Right cardiac atrium (tissue), 5 donors: ENCODE measurements at regions of chr17 and their contacts with region 1.

Region 1: GRCh38 chr17:9729034-9729650 is 62.2 kb downstream of the DHRS7C start:
- DNase-seq: no peak
- ATAC-seq: peak; percentile 50 to 68
- H3K4me3 ChIP-seq: no peak overlapping the region
- H3K27ac ChIP-seq: no peak overlapping the region
- H3K4me1 ChIP-seq: no peaks in the 10 kb centered on the region
- H3K27me3 ChIP-seq: no peaks in the 10 kb centered on the region

Region 2: GRCh38 chr17:9676085-9676484 is 53.1 kb before region 1 on chr17:
- intact Hi-C with region 1: no loop called
- DNase-seq: no peak
- ATAC-seq: no peak
- H3K4me3 ChIP-seq: no peak overlapping the region
- H3K27ac ChIP-seq: no peak overlapping the region
- H3K4me1 ChIP-seq: no peaks in the 10 kb centered on the region
- H3K27me3 ChIP-seq: no peaks in the 10 kb centered on the region

Region 3: GRCh38 chr17:9768381-9768934 is 39.3 kb after region 1 on chr17:
- intact Hi-C with region 1: loop called in 1 of 4 experiments (anchors 5 kb)
- DNase-seq: no peak
- ATAC-seq: no peak
- H3K4me3 ChIP-seq: no peak overlapping the region
- H3K27ac ChIP-seq: no peak overlapping the region
- H3K4me1 ChIP-seq: no peaks in the 10 kb centered on the region
- H3K27me3 ChIP-seq: no peaks in the 10 kb centered on the region

Region 4: GRCh38 chr17:9890124-9890523 is 161.0 kb after region 1 on chr17:
- intact Hi-C with region 1: loop called in 2 of 4 experiments (anchors 10 kb)
- DNase-seq: peak in 1 of 3 donors; percentile 63
- ATAC-seq: peak; percentile 44 to 56
- H3K4me3 ChIP-seq: no peak overlapping the region
- H3K27ac ChIP-seq: no peak overlapping the region
- H3K4me1 ChIP-seq: no peaks in the 10 kb centered on the region
- H3K27me3 ChIP-seq: no peaks in the 10 kb centered on the region

Region 5: GRCh38 chr17:9924735-9925191 is 195.6 kb after region 1 on chr17:
- intact Hi-C with region 1: loop called in 1 of 4 experiments (anchors 10 kb)
- DNase-seq: no peak
- ATAC-seq: peak; percentile 42 to 66
- H3K4me3 ChIP-seq: no peak overlapping the region
- H3K27ac ChIP-seq: no peak overlapping the region
- H3K4me1 ChIP-seq: no peaks in the 10 kb centered on the region
- H3K27me3 ChIP-seq: no peaks in the 10 kb centered on the region